HepG2 (cell line): ENCODE measurements at regions of chr2 and their contacts with region 1.

Region 1: GRCh38 chr2:3604991-3605961 is 10.4 kb downstream of the COLEC11 start:
- DNase-seq: peak; percentile 83
- ATAC-seq: peak; percentile 72
- H3K4me3 ChIP-seq: peak overlapping the region; percentile 47 to 65 (median 56)
- H3K27ac ChIP-seq: peak overlapping the region; percentile 83
- H3K4me1 ChIP-seq: peaks cover 72% of the 10 kb centered on the region
- H3K27me3 ChIP-seq: no peaks in the 10 kb centered on the region
- CTCF ChIP-seq: no peak
- EP300 ChIP-seq: peak; percentile 15 to 41; a peak in 3 of 4 replicates
- POLR2A ChIP-seq: peak; percentile 69 to 77
- RAD21 ChIP-seq: peak; percentile 21; the same call in 1 of the 2 replicates

Region 2: GRCh38 chr2:3585261-3586109 is 19.8 kb before region 1 on chr2:
- CTCF ChIA-PET with region 1: no interaction called
- POLR2A ChIA-PET with region 1: interaction called, 60 read pairs
- in situ Hi-C with region 1: no loop called
- intact Hi-C with region 1: no loop called
- DNase-seq: peak; percentile 88
- ATAC-seq: peak; percentile 82
- H3K4me3 ChIP-seq: peak overlapping the region; percentile 27 to 61 (median 48)
- H3K27ac ChIP-seq: peak overlapping the region; percentile 70
- H3K4me1 ChIP-seq: peaks cover 47% of the 10 kb centered on the region
- H3K27me3 ChIP-seq: no peaks in the 10 kb centered on the region
- CTCF ChIP-seq: peak; percentile 2; the same call in 1 of the 2 replicates
- EP300 ChIP-seq: peak in 1 of 2 experiments; percentile 83; a peak in 2 of 4 replicates
- POLR2A ChIP-seq: peak in 1 of 2 experiments; percentile 63; a peak in 2 of 4 replicates
- RAD21 ChIP-seq: no peak